Activated CD8-positive, alpha-beta T cell treated with anti-CD3 and anti-CD28 coated beads, Interleukin-2, amount 10 ng/mL, durations not matched to agents 7 days and 5 days (primary cell): ENCODE measurements at regions of chr12 and their contacts with region 1.

Region 1: GRCh38 chr12:56041552-56042429 is at the start of gene RPS26:
- DNase-seq: peak; percentile 97
- ATAC-seq: peak; percentile 91
- H3K4me3 Mint-ChIP-seq: peak within 1 kb of the TSS; percentile 96
- H3K27ac Mint-ChIP-seq: peak within 1 kb of the TSS; percentile 96
- H3K4me1 Mint-ChIP-seq: peaks cover 50% of the 10 kb centered on the region
- H3K27me3 Mint-ChIP-seq: no peaks in the 10 kb centered on the region
- total RNA-seq, gene RPS26: 25.2 to 27.2 TPM

Region 2: DNA sequence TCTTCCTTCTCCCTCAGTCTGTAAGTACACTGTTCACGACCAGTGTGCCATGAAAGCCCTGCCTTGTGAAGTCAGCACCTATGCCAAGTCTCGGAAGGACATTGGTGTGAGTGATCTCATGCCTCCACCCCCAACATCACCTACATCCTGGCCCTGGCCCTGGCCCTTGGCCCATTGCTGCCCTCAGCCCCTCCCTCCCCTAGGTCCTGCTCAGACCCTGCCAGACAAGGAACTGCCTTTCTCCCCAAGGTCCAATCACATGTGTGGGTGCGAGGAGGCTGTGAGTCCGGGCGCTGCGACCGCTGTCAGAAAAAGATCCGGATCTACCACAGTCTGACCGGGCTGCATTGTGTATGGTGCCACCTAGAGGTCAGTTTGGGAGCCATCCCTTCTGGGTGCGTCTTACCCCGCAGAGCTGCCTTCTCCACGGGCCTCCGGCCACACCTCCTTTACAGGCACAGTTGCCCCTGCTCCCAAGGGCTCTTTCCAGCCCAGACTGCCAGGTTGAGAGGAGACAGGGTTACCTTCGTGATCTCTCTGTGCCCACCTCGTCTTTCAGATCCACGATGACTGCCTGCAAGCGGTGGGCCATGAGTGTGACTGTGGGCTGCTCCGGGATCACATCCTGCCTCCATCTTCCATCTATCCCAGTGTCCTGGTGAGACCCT is 101.6 kb before region 1 on chr12:
- CTCF ChIA-PET with region 1: interaction called, 11 read pairs
- POLR2A ChIA-PET with region 1: no interaction called
- DNase-seq: peak; percentile 90
- ATAC-seq: peak; percentile 93
- H3K4me3 Mint-ChIP-seq: no peak overlapping the region
- H3K27ac Mint-ChIP-seq: peak overlapping the region; percentile 69
- H3K4me1 Mint-ChIP-seq: peaks cover 67% of the 10 kb centered on the region
- H3K27me3 Mint-ChIP-seq: no peaks in the 10 kb centered on the region

Region 3: DNA sequence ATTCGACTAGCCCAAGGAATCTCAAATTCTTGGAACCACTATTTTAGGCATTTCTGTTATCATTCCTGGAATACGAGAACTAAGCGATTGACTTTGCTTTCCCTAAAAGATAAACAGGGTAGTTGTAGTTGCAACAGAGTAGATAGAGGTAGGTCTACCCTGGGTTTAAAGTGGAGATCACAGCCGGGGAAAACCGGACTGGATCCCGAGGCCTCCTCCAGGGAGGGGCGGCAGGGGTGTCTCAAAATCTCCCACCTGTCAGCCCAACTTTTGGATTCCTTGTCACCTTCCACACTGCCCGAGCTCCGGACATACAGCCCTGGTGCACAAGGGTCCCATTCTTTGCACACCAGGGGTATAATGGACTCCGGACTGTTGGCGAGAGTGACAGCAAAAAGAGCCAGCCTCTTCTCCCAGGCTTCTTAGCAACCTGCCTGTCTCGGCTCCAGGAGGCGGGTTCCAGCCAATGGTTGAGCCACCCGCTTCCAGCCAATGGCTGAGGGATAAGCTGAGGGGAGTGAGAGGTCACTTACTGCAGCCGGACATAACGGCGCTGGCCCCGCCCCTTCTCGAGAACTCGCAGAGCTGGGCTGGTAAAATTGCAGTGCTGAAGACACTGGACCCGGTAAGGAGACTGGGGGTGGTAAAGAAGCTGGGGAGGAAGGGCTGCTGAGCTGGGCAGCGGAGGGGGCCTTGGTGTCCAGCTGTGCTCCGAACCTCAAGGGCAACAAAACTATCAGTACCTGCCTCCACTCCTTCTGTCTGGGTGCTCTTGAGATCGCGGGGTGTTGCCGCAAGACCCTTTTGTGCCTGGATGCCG is 44.9 kb before region 1 on chr12 and contains the start of gene SUOX:
- CTCF ChIA-PET with region 1: interaction called, 109 read pairs
- POLR2A ChIA-PET with region 1: interaction called, 6 read pairs
- DNase-seq: peak; percentile 63
- ATAC-seq: peak; percentile 73
- H3K4me3 Mint-ChIP-seq: peak within 1 kb of the TSS; percentile 76
- H3K27ac Mint-ChIP-seq: peak within 1 kb of the TSS; percentile 58
- H3K4me1 Mint-ChIP-seq: peaks cover 37% of the 10 kb centered on the region
- H3K27me3 Mint-ChIP-seq: no peaks in the 10 kb centered on the region
- total RNA-seq, gene SUOX: 5.8 to 6.8 TPM

Region 4: DNA sequence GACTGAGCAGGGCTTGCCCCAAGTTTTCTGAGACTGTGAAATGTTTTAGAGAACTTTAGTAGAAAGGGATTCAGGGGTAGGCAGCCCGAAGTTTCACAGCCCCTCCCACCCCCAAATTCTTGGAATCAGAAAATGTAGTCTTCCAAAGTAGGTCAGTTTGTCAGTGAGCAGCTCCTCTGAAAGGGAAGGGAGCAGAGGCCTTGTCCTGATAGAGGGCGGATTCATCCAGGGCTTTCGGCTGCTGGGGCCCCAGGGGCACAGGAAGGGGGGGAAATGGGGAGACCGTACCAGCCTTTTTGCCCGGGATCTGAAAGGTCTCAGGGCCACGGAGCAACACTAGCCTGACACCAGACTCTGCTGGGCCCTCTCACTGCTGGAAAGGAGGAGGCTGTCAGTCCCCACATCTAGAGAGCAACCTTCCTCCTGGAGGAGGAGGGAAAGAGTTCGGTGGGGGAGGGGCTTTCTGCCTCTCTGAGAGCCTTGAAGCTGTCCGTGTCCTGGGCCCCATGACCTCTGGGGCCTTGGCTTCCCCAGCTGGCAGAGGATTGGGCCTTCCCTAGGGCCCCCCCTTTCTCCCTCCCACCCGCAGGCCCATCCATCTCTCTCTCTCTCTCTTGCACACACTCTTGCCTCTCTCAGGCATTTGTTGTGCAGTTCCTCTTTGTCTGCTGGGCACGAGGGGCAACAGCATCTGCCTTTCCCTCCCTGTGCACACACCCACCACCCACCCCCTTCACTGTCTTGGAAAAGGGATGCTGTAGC is 21.2 kb before region 1 on chr12 and contains the start of gene IKZF4:
- CTCF ChIA-PET with region 1: interaction called, 11 read pairs
- POLR2A ChIA-PET with region 1: interaction called, 5 read pairs
- DNase-seq: peak; percentile 42
- ATAC-seq: peak; percentile 37
- H3K4me3 Mint-ChIP-seq: peak within 1 kb of the TSS; percentile 88
- H3K27ac Mint-ChIP-seq: peak within 1 kb of the TSS; percentile 96
- H3K4me1 Mint-ChIP-seq: peaks cover 53% of the 10 kb centered on the region
- H3K27me3 Mint-ChIP-seq: no peaks in the 10 kb centered on the region
- total RNA-seq, gene IKZF4: 19.9 to 20.7 TPM

Region 5: GRCh38 chr12:56061982-56062381 is 20.2 kb after region 1 on chr12:
- CTCF ChIA-PET with region 1: interaction called, 12 read pairs
- POLR2A ChIA-PET with region 1: no interaction called
- DNase-seq: no peak
- ATAC-seq: no peak
- H3K4me3 Mint-ChIP-seq: no peak overlapping the region
- H3K27ac Mint-ChIP-seq: no peak overlapping the region
- H3K4me1 Mint-ChIP-seq: no peaks in the 10 kb centered on the region
- H3K27me3 Mint-ChIP-seq: peaks cover 7% of the 10 kb centered on the region

Region 6: DNA sequence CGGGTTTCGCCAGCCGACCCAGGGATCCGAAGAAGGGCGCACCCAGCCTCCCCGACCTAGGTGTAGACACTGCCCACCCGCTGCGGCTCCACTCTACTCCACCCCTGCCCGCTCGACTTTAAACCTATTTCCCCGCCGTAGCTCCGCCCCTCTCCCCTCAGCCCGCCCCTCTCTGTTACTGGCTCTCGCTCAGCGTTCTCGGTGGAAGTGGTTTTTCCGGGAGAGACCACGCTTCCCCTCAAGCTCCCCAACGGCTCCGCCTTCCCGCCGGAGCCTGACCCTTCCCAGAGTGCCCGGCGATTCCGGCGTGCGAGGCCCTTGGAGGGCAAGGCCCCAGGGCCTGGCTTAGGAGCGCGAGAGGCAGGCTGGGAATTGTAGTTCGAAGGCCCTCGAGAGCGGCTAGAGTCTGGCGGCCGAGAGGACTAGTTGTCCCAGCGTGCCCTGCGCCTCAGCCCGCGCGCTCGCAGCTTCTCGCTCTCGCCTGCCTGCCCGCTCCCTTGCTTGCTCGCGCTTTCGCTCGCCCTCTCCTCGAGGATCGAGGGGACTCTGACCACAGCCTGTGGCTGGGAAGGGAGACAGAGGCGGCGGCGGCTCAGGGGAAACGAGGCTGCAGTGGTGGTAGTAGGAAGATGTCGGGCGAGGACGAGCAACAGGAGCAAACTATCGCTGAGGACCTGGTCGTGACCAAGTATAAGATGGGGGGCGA is 62.5 kb after region 1 on chr12 and contains the start of gene PA2G4:
- CTCF ChIA-PET with region 1: interaction called, 88 read pairs
- POLR2A ChIA-PET with region 1: interaction called, 34 read pairs
- DNase-seq: peak; percentile 99
- ATAC-seq: peak; percentile 94
- H3K4me3 Mint-ChIP-seq: peak within 1 kb of the TSS; percentile 100
- H3K27ac Mint-ChIP-seq: peak within 1 kb of the TSS; percentile 98
- H3K4me1 Mint-ChIP-seq: peaks cover 64% of the 10 kb centered on the region
- H3K27me3 Mint-ChIP-seq: no peaks in the 10 kb centered on the region
- total RNA-seq, gene PA2G4: 316 to 323 TPM